Testis (tissue), 5 donors: ENCODE measurements at regions of chr19 and their contacts with region 1.

Region 1: DNA sequence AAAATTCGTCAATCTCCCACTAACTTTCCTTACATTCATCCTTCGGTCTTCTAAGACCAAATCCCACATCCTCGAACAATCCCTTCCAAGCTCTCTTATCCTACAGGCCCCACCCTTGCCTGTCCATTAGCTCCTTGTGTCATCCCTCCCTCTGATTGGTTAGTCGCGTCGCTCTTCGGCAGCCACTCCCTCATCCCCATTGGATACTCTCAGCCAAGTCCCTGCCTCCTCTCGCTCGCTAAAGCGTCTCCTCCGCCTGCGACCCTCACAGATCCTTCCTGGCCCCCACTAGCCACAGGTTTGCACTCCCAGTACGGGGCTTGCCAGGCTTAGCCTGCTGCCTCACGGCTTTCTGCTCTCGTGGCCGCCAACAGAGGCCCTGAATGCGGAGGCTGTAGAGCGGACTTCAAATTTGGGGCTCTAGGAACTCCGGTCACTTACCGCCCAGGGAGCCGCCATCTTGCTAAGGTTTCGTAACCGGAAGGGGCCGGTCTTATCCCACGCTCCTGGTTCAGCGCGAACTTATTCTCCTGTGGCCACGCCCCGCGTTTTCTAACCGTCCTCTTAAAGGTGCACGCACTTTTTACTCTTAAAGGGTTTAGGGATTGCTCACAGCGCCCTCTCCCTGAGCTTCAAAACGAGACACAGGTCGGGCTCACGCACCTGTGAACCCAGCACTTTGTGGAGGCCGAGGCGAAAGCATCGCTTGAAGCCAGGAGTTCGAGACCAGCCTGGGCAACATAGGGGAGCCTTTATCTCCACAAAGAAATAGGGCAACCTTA is at the start of gene DMAC2:
- DNase-seq: peak; percentile 100
- H3K4me3 ChIP-seq: peak within 1 kb of the TSS; percentile 67 to 87
- H3K27ac ChIP-seq: peak within 1 kb of the TSS; percentile 92 to 95
- H3K4me1 ChIP-seq: no peaks in the 10 kb centered on the region
- H3K27me3 ChIP-seq: no peaks in the 10 kb centered on the region
- CTCF ChIP-seq: peak in 2 of 3 experiments; percentile 23 to 34
- POLR2A ChIP-seq: no peak
- total RNA-seq, gene DMAC2: 26.7 to 35.8 TPM

Region 2: DNA sequence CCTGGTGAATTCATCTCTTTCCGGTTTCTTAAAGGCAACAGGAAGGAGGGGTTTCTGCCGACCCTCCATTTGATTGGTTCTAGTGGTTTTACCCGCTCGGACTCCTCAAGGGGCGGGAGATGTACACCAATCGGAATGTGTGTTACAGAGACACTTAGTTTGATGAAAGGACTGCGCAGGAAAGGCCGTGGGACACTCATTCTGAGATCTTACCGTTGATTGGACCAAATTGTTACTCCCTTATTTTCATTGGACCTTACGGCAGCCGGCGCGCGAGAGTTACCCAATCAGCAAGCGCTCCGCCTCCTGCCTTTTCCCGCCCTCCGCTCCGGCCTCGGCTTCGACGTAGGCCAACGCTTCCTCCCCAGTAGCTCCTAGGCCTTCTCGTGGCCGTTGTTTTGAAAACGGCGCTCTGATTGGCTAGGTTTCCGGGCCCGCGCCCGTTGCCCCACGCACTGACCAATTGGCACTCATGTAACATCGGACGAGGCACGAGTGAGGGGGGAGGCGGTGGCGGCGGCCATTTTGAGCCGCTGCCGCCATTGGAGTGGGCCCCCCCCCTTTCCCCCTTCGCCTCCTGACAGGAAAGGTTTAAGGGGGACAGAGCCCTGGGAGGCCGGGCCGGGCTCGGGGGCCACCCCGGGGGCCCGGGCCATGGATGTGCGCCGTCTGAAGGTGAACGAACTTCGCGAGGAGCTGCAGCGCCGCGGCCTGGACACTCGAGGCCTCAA is 175.6 kb before region 1 on chr19 and contains the start of gene HNRNPUL1:
- intact Hi-C with region 1: no loop called
- DNase-seq: peak; percentile 99
- H3K4me3 ChIP-seq: peak within 1 kb of the TSS; percentile 87 to 100
- H3K27ac ChIP-seq: peak within 1 kb of the TSS; percentile 98 to 100
- H3K4me1 ChIP-seq: peaks cover 21% of the 10 kb centered on the region
- H3K27me3 ChIP-seq: no peaks in the 10 kb centered on the region
- CTCF ChIP-seq: peak in 1 of 3 experiments; percentile 24
- POLR2A ChIP-seq: no peak
- total RNA-seq, gene HNRNPUL1: 192 to 197 TPM

Region 3: GRCh38 chr19:41521931-41522555 is 82.4 kb after region 1 on chr19:
- intact Hi-C with region 1: no loop called
- DNase-seq: no peak
- H3K4me3 ChIP-seq: peak overlapping the region; percentile 34
- H3K27ac ChIP-seq: peak overlapping the region in 1 of 2 donors; percentile 45
- H3K4me1 ChIP-seq: no peaks in the 10 kb centered on the region
- H3K27me3 ChIP-seq: no peaks in the 10 kb centered on the region
- CTCF ChIP-seq: no peak
- POLR2A ChIP-seq: no peak

Region 4: GRCh38 chr19:41570639-41571112 is 131.0 kb after region 1 on chr19:
- intact Hi-C with region 1: loop called (anchors 10 kb)
- DNase-seq: peak; percentile 91
- H3K4me3 ChIP-seq: no peak overlapping the region
- H3K27ac ChIP-seq: no peak overlapping the region
- H3K4me1 ChIP-seq: no peaks in the 10 kb centered on the region
- H3K27me3 ChIP-seq: no peaks in the 10 kb centered on the region
- CTCF ChIP-seq: peak; percentile 31 to 81 (median 75)
- POLR2A ChIP-seq: no peak